Adrenal gland (tissue), 19 donors: ENCODE measurements at regions of chr1 and their contacts with region 1.

Region 1: DNA sequence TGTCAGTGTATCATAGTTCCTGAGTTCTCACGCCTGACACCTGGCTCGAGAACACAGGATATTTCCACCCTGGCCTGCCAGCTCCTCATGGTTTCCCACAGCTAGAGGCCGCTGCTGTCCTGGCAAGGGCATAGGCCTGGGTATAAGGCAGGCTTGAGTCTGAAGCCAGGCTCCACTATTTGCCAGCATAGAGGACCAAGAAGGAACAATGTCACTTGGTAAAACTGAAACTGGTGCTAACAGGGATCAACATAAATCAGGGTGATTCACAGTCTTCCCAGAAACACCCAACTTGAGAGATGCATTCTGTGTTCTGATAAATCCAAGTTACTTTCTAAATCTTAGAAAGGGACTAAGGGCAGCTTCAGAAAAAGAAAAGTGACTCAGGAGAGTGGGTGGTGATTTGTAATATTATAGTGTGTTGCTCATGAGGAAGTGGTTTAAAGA is 6.9 kb upstream of the S100A2 start:
- DNase-seq: peak; percentile 88 to 96 (median 94)
- H3K4me3 ChIP-seq: no peak overlapping the region
- H3K27ac ChIP-seq: peak overlapping the region in 4 of 5 donors; percentile 35 to 68 (median 57)
- H3K4me1 ChIP-seq: peaks cover 12 to 23% of the 10 kb centered on the region in 2 donors
- H3K27me3 ChIP-seq: no peaks in the 10 kb centered on the region
- CTCF ChIP-seq: peak; percentile 77 to 92 (median 90)
- POLR2A ChIP-seq: peak in 1 of 2 donors; percentile 16

Region 2: GRCh38 chr1:153510984-153511410 is 61.6 kb before region 1 on chr1:
- intact Hi-C with region 1: loop called (anchors 2 to 5 kb)
- DNase-seq: peak; percentile 81 to 90 (median 86)
- H3K4me3 ChIP-seq: no peak overlapping the region
- H3K27ac ChIP-seq: peak overlapping the region in 1 of 5 donors; percentile 8
- H3K4me1 ChIP-seq: peaks cover 15 to 18% of the 10 kb centered on the region in 2 donors
- H3K27me3 ChIP-seq: no peaks in the 10 kb centered on the region
- CTCF ChIP-seq: peak; percentile 76 to 96 (median 93)
- POLR2A ChIP-seq: no peak

Region 3: GRCh38 chr1:153532769-153533599 is 39.6 kb before region 1 on chr1:
- intact Hi-C with region 1: loop called (anchors 2 to 5 kb)
- DNase-seq: peak; percentile 69 to 92 (median 78)
- H3K4me3 ChIP-seq: peak overlapping the region in 1 of 4 donors; percentile 65
- H3K27ac ChIP-seq: peak overlapping the region in 3 of 5 donors; percentile 42 to 94 (median 93)
- H3K4me1 ChIP-seq: peaks cover 22 to 35% of the 10 kb centered on the region in 2 donors
- H3K27me3 ChIP-seq: no peaks in the 10 kb centered on the region
- CTCF ChIP-seq: peak; percentile 63 to 89 (median 74)
- POLR2A ChIP-seq: peak in 1 of 2 donors; percentile 1

Region 4: GRCh38 chr1:153617675-153618074 is 45.1 kb after region 1 on chr1:
- intact Hi-C with region 1: loop called in 1 of 2 experiments (anchors 5 kb)
- DNase-seq: peak in 6 of 7 donors; percentile 64 to 92 (median 78)
- H3K4me3 ChIP-seq: no peak overlapping the region
- H3K27ac ChIP-seq: no peak overlapping the region
- H3K4me1 ChIP-seq: no peaks in the 10 kb centered on the region
- H3K27me3 ChIP-seq: no peaks in the 10 kb centered on the region
- CTCF ChIP-seq: peak in 5 of 6 experiments; percentile 22 to 92 (median 67)
- POLR2A ChIP-seq: no peak

Region 5: GRCh38 chr1:153663211-153663610 is 90.6 kb after region 1 on chr1:
- intact Hi-C with region 1: loop called in 1 of 2 experiments (anchors 10 kb)
- DNase-seq: peak in 1 of 7 donors; percentile 19
- H3K4me3 ChIP-seq: no peak overlapping the region
- H3K27ac ChIP-seq: peak overlapping the region in 1 of 5 donors; percentile 7
- H3K4me1 ChIP-seq: peaks cover 8 to 14% of the 10 kb centered on the region in 2 donors
- H3K27me3 ChIP-seq: no peaks in the 10 kb centered on the region
- CTCF ChIP-seq: no peak
- POLR2A ChIP-seq: no peak

Region 6: DNA sequence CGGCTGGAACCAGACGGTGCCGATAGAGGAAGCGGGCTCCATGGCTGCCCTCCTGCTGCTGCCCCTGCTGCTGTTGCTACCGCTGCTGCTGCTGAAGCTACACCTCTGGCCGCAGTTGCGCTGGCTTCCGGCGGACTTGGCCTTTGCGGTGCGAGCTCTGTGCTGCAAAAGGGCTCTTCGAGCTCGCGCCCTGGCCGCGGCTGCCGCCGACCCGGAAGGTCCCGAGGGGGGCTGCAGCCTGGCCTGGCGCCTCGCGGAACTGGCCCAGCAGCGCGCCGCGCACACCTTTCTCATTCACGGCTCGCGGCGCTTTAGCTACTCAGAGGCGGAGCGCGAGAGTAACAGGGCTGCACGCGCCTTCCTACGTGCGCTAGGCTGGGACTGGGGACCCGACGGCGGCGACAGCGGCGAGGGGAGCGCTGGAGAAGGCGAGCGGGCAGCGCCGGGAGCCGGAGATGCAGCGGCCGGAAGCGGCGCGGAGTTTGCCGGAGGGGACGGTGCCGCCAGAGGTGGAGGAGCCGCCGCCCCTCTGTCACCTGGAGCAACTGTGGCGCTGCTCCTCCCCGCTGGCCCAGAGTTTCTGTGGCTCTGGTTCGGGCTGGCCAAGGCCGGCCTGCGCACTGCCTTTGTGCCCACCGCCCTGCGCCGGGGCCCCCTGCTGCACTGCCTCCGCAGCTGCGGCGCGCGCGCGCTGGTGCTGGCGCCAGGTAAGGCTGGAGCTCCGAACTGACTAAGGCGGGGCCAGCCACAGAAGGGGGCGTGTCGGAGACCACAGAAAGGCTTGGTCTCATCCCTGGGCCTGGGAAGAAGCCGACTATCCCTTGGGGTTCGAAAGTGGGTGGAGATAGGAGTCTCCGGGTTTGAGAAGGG is 203.1 kb after region 1 on chr1:
- intact Hi-C with region 1: loop called in 1 of 2 experiments (anchors 10 kb)
- DNase-seq: peak in 5 of 7 donors; percentile 44 to 79 (median 62)
- H3K4me3 ChIP-seq: peak overlapping the region; percentile 17 to 55 (median 36)
- H3K27ac ChIP-seq: peak overlapping the region in 4 of 5 donors; percentile 16 to 85 (median 60)
- H3K4me1 ChIP-seq: peaks cover 24 to 54% of the 10 kb centered on the region in 2 donors
- H3K27me3 ChIP-seq: no peaks in the 10 kb centered on the region
- CTCF ChIP-seq: no peak
- POLR2A ChIP-seq: peak in 1 of 2 donors; percentile 48